Transverse colon (tissue), 4 donors: ENCODE measurements at regions of chr6 and their contacts with region 1.

Region 1: GRCh38 chr6:28863604-28864320 is 60.0 kb downstream of the TRIM27 start:
- DNase-seq: peak; percentile 79
- H3K4me3 ChIP-seq: peak overlapping the region; percentile 54 to 61 (median 60)
- H3K27ac ChIP-seq: peak overlapping the region; percentile 68 to 84 (median 77)
- H3K4me1 ChIP-seq: peaks cover 0 to 17% (median 11%) of the 10 kb centered on the region in 4 donors
- H3K27me3 ChIP-seq: peaks cover 9% of the 10 kb centered on the region
- CTCF ChIP-seq: peak in 1 of 5 experiments; percentile 1
- EP300 ChIP-seq: no peak
- POLR2A ChIP-seq: no peak

Region 2: GRCh38 chr6:28923318-28924102 is 59.7 kb after region 1 on chr6 and contains the start of gene TRIM27:
- in situ Hi-C with region 1: no loop called
- intact Hi-C with region 1: loop called (anchors 10 kb)
- DNase-seq: peak; percentile 92
- H3K4me3 ChIP-seq: peak within 1 kb of the TSS; percentile 57 to 80 (median 74)
- H3K27ac ChIP-seq: peak within 1 kb of the TSS; percentile 93 to 97 (median 97)
- H3K4me1 ChIP-seq: peaks cover 7 to 24% (median 22%) of the 10 kb centered on the region in 4 donors
- H3K27me3 ChIP-seq: no peaks in the 10 kb centered on the region
- CTCF ChIP-seq: peak in 1 of 5 experiments; percentile 33
- EP300 ChIP-seq: no peak
- POLR2A ChIP-seq: peak; percentile 94
- total RNA-seq, gene TRIM27: 27.3 to 237 (median 48.9) TPM